ENCODE measurements at regions of chr17 and their contacts with region 1.

Region 1: GRCh38 chr17:8189711-8190477 is at the start of gene BORCS6:
- DNase-seq: peak; percentile 83 to 98 (median 94)
- ATAC-seq: peak; percentile 67 to 71
- H3K4me3 Mint-ChIP-seq: peak within 1 kb of the TSS in 3 of 10 donors; percentile 3 to 51 (median 39)
- H3K27ac Mint-ChIP-seq: peak within 1 kb of the TSS in 8 of 10 donors; percentile 69 to 94 (median 92)
- H3K4me1 Mint-ChIP-seq: peaks cover 6 to 13% (median 12%) of the 10 kb centered on the region in 4 donors
- H3K27me3 Mint-ChIP-seq: no peaks in the 10 kb centered on the region
- polyA plus RNA-seq, gene BORCS6: 16.1 to 22.6 (median 16.9) TPM

Region 2: DNA sequence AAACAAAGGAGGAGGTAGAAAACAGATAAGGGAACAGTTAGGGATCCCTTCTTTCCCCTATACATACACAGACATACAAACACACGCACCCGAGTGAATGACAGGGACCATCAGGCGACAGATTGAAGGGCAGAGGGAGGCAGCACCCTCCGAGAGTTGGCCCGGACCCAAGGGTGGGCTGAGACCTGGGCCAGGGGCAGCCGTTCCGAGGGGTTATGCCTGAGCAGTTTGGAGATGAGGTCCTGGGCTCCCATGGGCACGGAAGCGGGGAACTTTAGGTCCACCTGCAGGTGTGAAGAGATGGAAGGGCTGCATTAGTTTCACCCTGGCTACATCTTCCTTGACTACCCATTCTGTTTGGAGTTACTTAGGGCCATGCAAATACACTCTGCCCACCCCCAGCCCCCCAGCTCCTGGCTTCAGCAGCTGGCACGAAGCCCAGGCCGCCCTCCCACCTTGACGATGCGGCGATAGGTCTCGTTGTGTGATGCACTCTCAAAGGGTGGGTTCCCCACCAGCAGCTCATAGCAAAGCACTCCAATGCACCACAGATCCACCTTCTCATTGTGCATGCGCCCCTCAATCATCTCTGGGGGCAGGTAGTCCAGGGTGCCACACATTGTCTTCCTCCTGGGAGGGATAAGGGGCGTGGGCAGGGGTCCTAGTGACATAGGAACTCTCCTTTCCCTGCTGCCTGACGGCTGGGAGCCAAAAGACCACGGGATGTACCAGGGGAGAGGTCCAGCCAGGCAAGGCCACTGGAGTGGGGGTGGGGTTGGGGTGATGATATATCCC is 15.1 kb after region 1 on chr17:
- POLR2A ChIA-PET with region 1: interaction called, 83 read pairs
- DNase-seq: no peak
- ATAC-seq: no peak
- H3K4me3 Mint-ChIP-seq: no peak overlapping the region
- H3K27ac Mint-ChIP-seq: peak overlapping the region in 2 of 10 donors; percentile 22 to 32
- H3K4me1 Mint-ChIP-seq: peaks cover 5 to 9% (median 7%) of the 10 kb centered on the region in 4 donors
- H3K27me3 Mint-ChIP-seq: peaks cover 0 to 2% (median 0%) of the 10 kb centered on the region in 5 donors

Region 3: GRCh38 chr17:8209909-8210760 is 20.2 kb after region 1 on chr17 and contains the start of gene AURKB:
- POLR2A ChIA-PET with region 1: interaction called, 414 read pairs
- DNase-seq: peak; percentile 85 to 98 (median 91)
- ATAC-seq: peak; percentile 100
- H3K4me3 Mint-ChIP-seq: peak within 1 kb of the TSS; percentile 88 to 96 (median 95)
- H3K27ac Mint-ChIP-seq: peak within 1 kb of the TSS; percentile 79 to 96 (median 89)
- H3K4me1 Mint-ChIP-seq: peaks cover 13 to 21% (median 15%) of the 10 kb centered on the region in 4 donors
- H3K27me3 Mint-ChIP-seq: no peaks in the 10 kb centered on the region
- polyA plus RNA-seq, gene AURKB: not detected

Region 4: DNA sequence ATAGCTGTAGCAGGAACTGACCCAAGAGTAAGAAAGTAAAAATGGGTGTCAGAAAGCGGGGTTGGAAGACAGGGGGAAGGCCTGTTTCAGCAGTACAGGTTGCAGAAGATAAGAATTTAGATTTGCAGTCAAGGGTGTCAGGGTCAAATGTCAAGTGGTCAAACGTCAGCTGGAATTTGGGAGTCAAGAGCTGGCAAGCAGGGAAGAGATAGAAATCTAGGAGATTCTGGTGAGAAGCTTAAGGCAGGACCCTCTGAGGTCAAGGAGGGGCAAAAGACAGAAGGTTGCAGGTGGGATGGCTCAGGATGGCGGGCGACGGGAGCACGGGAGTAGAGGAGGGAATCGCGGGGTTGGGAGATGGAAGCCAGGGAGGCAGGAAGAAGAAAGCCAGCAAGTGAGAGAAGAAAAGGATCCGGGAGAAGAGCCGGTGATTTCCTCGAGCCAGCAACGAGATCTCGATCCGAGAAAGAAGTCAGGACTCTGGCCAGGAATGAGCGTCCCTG is 105.0 kb after region 1 on chr17:
- POLR2A ChIA-PET with region 1: interaction called, 28 read pairs
- DNase-seq: no peak
- ATAC-seq: no peak
- H3K4me3 Mint-ChIP-seq: peak overlapping the region; percentile 88 to 97 (median 94)
- H3K27ac Mint-ChIP-seq: peak overlapping the region; percentile 84 to 97 (median 95)
- H3K4me1 Mint-ChIP-seq: peaks cover 20 to 39% (median 31%) of the 10 kb centered on the region in 4 donors
- H3K27me3 Mint-ChIP-seq: no peaks in the 10 kb centered on the region

Measured in naive thymus-derived CD8-positive, alpha-beta T cell (primary cell).